ENCODE measurements at regions of chr15 and their contacts with region 1.

Region 1: GRCh38 chr15:40857601-40858341 is 13.9 kb downstream of the SPINT1 start:
- DNase-seq: peak; percentile 85 to 92 (median 88)
- ATAC-seq: peak; percentile 93
- H3K4me3 ChIP-seq: no peak overlapping the region
- H3K27ac ChIP-seq: peak overlapping the region; percentile 40 to 74 (median 65)
- H3K4me1 ChIP-seq: peaks cover 36% of the 10 kb centered on the region
- H3K27me3 ChIP-seq: no peaks in the 10 kb centered on the region
- CTCF ChIP-seq: peak; percentile 91 to 99 (median 99)
- POLR2A ChIP-seq: peak in 1 of 3 donors; percentile 11

Region 2: DNA sequence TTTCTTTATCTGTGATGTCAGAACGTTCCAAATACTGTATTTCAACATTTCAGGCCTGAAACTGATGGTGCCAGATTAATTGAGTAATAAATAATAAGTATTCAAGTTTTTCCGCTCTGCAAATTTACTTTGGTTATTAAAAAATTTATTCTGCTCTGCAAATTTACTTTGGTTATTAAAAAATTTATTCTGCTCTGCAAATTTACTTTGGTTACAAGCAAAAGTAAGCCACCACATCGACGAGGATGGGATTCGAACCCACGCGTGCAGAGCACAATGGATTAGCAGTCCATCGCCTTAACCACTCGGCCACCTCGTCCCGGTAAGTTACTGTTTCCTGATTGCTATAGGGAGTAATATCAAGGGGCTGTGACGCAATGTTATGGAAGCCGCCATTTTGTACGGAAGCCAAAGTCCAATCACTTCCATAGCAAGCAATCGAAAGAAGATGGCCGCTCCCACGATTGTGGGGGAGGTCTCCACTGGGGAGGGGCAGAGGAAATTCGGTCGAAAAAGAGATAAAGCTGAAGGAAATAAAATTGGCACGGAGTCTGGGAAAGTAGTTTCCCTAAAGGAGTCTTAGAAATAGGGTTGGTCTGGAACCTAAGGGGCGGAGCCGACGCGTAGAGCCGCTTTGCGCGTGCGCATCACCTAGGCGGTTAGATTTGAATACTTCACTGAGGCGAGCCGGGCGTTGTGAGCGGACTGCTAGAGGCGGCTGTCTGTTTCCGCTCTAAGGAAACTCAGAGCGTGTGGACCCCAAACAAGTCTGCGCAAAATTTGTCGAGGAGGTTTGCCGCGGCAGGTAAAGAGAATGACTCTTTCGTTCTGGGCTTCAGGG is 264.0 kb before region 1 on chr15 and contains the start of gene KNL1:
- intact Hi-C with region 1: no loop called
- DNase-seq: peak; percentile 95 to 97 (median 96)
- ATAC-seq: peak; percentile 92
- H3K4me3 ChIP-seq: peak within 1 kb of the TSS; percentile 24 to 31
- H3K27ac ChIP-seq: peak within 1 kb of the TSS; percentile 70 to 89 (median 88)
- H3K4me1 ChIP-seq: peaks cover 10% of the 10 kb centered on the region
- H3K27me3 ChIP-seq: no peaks in the 10 kb centered on the region
- CTCF ChIP-seq: no peak
- POLR2A ChIP-seq: peak in 2 of 3 donors; percentile 22 to 44
- total RNA-seq, gene KNL1: not detected

Region 3: DNA sequence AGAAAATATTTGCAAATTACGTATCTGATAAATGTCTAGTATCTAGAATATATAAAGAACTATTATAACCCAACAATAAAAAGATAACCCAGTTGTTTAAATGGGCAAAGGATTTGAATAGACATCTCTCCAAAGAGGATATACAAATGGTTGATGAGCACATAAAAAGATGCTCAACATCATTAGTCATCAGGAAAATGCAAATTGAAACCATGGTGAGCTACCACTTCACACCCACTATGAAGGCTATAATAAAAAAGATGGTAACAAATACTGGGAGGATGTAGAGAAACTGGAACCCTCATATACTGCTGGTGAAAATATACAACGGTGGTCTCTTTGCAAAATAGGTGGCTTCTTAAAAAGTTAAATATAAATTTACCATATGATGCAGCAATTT is 134.8 kb before region 1 on chr15:
- intact Hi-C with region 1: no loop called
- DNase-seq: no peak
- ATAC-seq: no peak
- H3K4me3 ChIP-seq: no peak overlapping the region
- H3K27ac ChIP-seq: no peak overlapping the region
- H3K4me1 ChIP-seq: no peaks in the 10 kb centered on the region
- H3K27me3 ChIP-seq: no peaks in the 10 kb centered on the region
- CTCF ChIP-seq: no peak
- POLR2A ChIP-seq: no peak

Region 4: DNA sequence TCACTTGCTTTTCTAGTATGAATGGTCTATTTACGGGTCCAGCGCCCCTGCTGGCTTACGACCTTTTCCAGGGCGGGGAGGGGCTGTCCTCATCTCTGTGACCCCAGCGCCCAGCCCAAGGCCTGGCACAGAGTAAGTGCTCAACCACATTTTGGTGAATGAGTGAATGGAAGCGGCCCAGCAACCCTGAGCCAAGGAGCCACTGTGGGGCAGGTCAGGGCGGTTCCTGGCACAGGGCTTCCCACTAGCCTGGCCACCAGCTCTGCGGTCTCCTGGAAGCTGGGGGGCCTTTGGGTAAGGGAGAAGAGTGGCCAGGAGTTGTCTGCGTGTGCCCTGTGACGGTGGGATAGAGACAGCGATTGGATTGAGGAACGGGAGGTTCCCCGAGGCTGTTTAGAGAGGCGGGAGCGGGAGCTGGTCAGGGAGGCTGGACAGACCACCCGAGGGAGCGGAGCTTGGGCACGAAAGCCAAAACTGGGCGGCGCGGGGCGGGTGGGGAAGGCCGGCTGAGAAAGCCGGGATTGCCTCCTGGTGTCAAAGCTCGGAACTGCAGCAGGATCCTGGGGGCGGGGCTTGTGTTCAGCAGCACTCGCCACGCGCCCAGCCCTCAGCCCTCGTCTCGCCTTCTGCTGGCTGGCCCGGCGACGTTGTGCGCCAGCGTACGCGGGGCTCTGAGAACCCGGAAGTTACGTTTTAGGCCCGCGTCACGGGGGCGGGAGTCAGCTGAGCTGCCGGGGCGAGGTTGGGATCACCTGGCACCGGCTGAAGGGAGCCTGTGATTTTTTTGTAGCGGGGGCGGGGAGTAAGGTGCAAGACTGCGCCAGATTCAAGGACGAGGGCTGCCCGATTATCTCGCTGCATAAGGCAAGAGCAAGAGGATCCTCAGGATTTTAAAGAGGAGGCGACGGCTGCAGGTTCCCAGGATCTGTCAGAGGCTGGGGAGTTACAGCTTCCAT is 36.2 kb after region 1 on chr15 and contains the start of gene VPS18:
- intact Hi-C with region 1: loop called (anchors 5 kb)
- DNase-seq: peak; percentile 98 to 99 (median 99)
- ATAC-seq: peak; percentile 98
- H3K4me3 ChIP-seq: peak within 1 kb of the TSS; percentile 76 to 82
- H3K27ac ChIP-seq: peak within 1 kb of the TSS; percentile 82 to 94 (median 88)
- H3K4me1 ChIP-seq: peaks cover 32% of the 10 kb centered on the region
- H3K27me3 ChIP-seq: no peaks in the 10 kb centered on the region
- CTCF ChIP-seq: peak; percentile 97 to 99 (median 99)
- POLR2A ChIP-seq: peak; percentile 70 to 85 (median 81)
- total RNA-seq, gene VPS18: 10.9 to 14.8 TPM

Measured in body of pancreas (tissue), 4 donors.